PC-9 (cell line): ENCODE measurements at regions of chr15 and their contacts with region 1.

Region 1: GRCh38 chr15:74053941-74054529 is 28.3 kb downstream of the GOLGA6A start:
- DNase-seq: peak; percentile 46 to 64
- H3K4me3 ChIP-seq: no peak overlapping the region
- H3K27ac ChIP-seq: no peak overlapping the region
- H3K4me1 ChIP-seq: peaks cover 38% of the 10 kb centered on the region
- H3K27me3 ChIP-seq: no peaks in the 10 kb centered on the region
- CTCF ChIP-seq: peak; percentile 57

Region 2: DNA sequence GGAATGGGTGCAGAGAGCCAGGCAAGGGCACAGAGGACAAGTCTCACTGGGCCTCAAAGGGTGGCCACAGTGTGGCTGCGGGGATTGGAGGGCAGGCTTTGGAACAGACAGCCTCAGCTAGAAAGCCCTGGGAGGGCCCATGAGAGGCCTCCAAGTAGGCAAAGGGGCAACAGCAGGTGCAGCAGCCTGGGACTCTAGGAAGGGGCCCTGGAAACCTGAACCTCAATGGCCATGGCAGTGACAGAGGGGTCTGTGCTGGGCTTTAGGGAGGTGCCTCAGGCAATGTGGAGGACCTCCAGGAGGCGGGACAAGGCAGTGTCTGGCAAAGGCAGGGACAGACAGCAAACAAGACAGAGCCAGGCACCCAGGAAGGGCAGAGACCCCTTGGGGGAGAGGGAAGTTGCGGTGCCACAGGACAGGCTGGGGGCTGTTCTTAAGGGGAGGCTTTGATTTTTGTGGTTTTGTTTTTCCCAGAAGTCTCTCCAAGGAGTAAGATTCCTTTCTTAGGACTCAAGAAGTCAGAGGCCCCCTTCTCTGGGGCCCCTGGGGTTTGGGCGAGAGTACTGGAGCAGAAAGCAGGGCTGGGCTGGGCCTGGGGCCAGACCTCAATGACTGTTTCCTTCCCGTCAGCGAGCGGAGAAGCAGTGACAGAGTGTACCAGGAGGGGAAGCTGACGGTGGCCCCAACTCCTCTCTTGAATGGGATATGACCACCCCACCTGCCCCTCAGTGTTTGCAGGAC is 71.6 kb before region 1 on chr15:
- CTCF ChIA-PET with region 1: no interaction called
- POLR2A ChIA-PET with region 1: no interaction called
- intact Hi-C with region 1: loop called (anchors 5 kb)
- DNase-seq: peak; percentile 52 to 79
- H3K4me3 ChIP-seq: no peak overlapping the region; the same call in 1 of the 2 replicates
- H3K27ac ChIP-seq: peak overlapping the region; percentile 49
- H3K4me1 ChIP-seq: peaks cover 35% of the 10 kb centered on the region
- H3K27me3 ChIP-seq: no peaks in the 10 kb centered on the region
- CTCF ChIP-seq: no peak

Region 3: GRCh38 chr15:73994419-73994883 is 59.6 kb before region 1 on chr15 and contains the start of gene PML:
- CTCF ChIA-PET with region 1: interaction called, 13 read pairs
- POLR2A ChIA-PET with region 1: no interaction called
- intact Hi-C with region 1: no loop called
- DNase-seq: peak; percentile 86 to 91
- H3K4me3 ChIP-seq: peak within 1 kb of the TSS; percentile 92
- H3K27ac ChIP-seq: peak within 1 kb of the TSS; percentile 53
- H3K4me1 ChIP-seq: peaks cover 41% of the 10 kb centered on the region
- H3K27me3 ChIP-seq: no peaks in the 10 kb centered on the region
- CTCF ChIP-seq: no peak
- total RNA-seq, gene PML: 67.2 and 81.8 TPM in 2 replicates

Region 4: GRCh38 chr15:74307827-74308644 is 254.0 kb after region 1 on chr15:
- CTCF ChIA-PET with region 1: interaction called, 12 read pairs
- POLR2A ChIA-PET with region 1: no interaction called
- intact Hi-C with region 1: no loop called
- DNase-seq: peak; percentile 59 to 68
- H3K4me3 ChIP-seq: no peak overlapping the region
- H3K27ac ChIP-seq: no peak overlapping the region
- H3K4me1 ChIP-seq: peaks cover 6% of the 10 kb centered on the region; the same call in 1 of the 2 replicates
- H3K27me3 ChIP-seq: no peaks in the 10 kb centered on the region
- CTCF ChIP-seq: peak; percentile 84

Region 5: GRCh38 chr15:74573987-74574386 is 520.0 kb after region 1 on chr15:
- CTCF ChIA-PET with region 1: no interaction called
- POLR2A ChIA-PET with region 1: no interaction called
- intact Hi-C with region 1: no loop called
- DNase-seq: no peak
- H3K4me3 ChIP-seq: no peak overlapping the region
- H3K27ac ChIP-seq: no peak overlapping the region
- H3K4me1 ChIP-seq: no peaks in the 10 kb centered on the region
- H3K27me3 ChIP-seq: no peaks in the 10 kb centered on the region
- CTCF ChIP-seq: no peak